K562 (cell line): ENCODE measurements at regions of chr17 and their contacts with region 1.

Region 1: DNA sequence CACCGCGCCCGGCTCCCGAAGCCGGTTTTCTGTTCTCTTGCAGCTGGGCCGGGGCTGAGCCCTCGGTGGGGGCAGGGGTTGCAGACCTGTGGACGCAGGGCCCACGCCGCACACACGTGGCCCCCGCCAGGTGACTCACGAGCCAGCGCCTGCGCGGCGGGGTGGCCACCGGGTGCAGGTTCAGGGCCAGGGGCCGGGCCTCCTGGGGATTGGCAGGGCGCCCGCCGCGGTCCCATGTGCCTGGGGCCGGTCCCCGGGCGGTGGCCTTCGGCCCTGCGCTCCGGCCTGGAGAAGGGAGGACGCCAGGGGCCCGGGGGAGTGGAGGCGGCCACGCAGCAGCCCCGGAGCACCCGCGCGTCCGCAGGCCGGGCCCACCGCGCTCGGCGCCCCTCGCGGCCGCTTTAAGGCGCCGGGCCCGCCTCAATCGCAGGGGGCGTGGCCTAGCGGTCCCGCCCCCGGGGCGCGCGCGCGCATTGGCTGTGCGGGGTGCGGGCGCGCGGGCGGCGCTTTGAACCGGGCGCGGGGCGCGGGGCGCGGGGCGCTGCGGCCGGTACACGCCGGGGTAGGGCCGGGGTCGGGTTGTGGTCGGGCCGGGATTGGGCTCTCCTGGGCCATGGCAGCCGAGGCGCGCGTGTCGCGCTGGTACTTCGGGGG is at the start of gene SLC25A10:
- DNase-seq: peak; percentile 88 to 92 (median 90)
- ATAC-seq: peak; percentile 71
- H3K4me3 ChIP-seq: peak within 1 kb of the TSS; percentile 93
- H3K27ac ChIP-seq: peak within 1 kb of the TSS; percentile 88
- H3K4me1 ChIP-seq: peaks cover 23 to 89% of the 10 kb centered on the region in 2 experiments
- H3K27me3 ChIP-seq: no peaks in the 10 kb centered on the region
- CTCF ChIP-seq: no peak
- EP300 ChIP-seq: no peak
- POLR2A ChIP-seq: no peak; the same call in 1 of the 2 replicates
- RAD21 ChIP-seq: no peak
- polyA plus RNA-seq, gene SLC25A10: 0.10 to 1.5 TPM

Region 2: DNA sequence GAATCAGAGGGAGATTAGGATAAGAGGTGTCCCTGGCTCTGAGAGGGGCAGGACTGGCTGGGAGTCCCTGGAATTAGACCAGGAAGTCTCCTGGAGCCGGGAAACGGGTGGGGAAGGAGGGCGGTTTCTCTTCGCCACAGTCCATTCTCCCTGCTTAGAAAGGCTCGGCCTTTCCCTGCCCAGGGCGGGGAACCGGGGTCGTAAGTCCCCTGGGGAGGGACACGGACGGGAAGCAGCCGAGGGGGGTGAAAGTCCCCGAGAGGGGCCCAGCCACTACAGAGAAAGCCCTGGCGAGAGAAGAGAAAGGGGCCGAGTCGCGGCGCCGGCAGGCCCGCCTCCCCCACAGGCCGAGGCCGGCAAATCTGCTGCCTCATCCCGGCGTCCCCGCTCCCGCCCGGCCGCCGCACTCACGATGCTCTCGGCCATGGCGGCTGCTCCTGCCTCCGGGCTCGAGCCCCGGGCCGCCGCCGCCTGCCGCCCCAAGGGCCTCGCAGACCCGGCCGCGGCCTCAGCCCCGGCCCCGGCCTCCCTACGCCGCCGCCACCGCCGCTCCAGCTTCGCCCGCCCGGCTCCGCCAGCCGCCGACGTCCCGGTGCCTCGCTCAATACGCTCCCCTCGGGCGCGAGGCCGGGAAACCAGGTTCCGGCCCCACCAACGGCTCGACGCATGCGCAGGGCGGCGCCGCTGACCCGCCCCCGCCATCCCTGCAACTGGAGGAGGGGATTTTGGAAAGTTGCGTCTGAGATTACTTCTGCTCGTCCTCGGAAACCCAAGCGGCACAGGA is 75.2 kb before region 1 on chr17 and contains the starts of genes NPLOC4 and TSPAN10:
- CTCF ChIA-PET with region 1: no interaction called
- POLR2A ChIA-PET with region 1: no interaction called
- in situ Hi-C with region 1: no loop called
- intact Hi-C with region 1: no loop called
- DNase-seq: peak; percentile 91 to 98 (median 97)
- ATAC-seq: peak; percentile 91
- H3K4me3 ChIP-seq: peak within 1 kb of the TSS; percentile 69
- H3K27ac ChIP-seq: peak within 1 kb of the TSS; percentile 87
- H3K4me1 ChIP-seq: peaks cover 20 to 22% of the 10 kb centered on the region in 2 experiments; a peak in 4 of 5 replicates
- H3K27me3 ChIP-seq: no peaks in the 10 kb centered on the region
- CTCF ChIP-seq: no peak
- EP300 ChIP-seq: no peak
- POLR2A ChIP-seq: no peak
- RAD21 ChIP-seq: 0 out of 4 replicates have a peak, but pooled peaks of 1 of the 2 experiments have one; percentile 11
- polyA plus RNA-seq, gene NPLOC4: 1.5 to 2.5 TPM
- polyA plus RNA-seq, gene TSPAN10: 0.08 to 0.13 TPM

Region 3: GRCh38 chr17:81722184-81723120 is 10.5 kb after region 1 on chr17:
- CTCF ChIA-PET with region 1: no interaction called
- POLR2A ChIA-PET with region 1: interaction called, 59 read pairs
- in situ Hi-C with region 1: no loop called
- intact Hi-C with region 1: no loop called
- DNase-seq: peak; percentile 70 to 80 (median 74)
- ATAC-seq: peak; percentile 77
- H3K4me3 ChIP-seq: no peak overlapping the region
- H3K27ac ChIP-seq: peak overlapping the region; percentile 54; the same call in 2 of the 3 replicates
- H3K4me1 ChIP-seq: peaks cover 19 to 53% of the 10 kb centered on the region in 2 experiments
- H3K27me3 ChIP-seq: no peaks in the 10 kb centered on the region
- CTCF ChIP-seq: no peak
- EP300 ChIP-seq: no peak
- POLR2A ChIP-seq: peak; percentile 66
- RAD21 ChIP-seq: no peak